Activated naive CD4-positive, alpha-beta T cell treated with anti-CD3 and anti-CD28 coated beads for 36 hours (primary cell): ENCODE measurements at regions of chr2 and their contacts with region 1.

Region 1: DNA sequence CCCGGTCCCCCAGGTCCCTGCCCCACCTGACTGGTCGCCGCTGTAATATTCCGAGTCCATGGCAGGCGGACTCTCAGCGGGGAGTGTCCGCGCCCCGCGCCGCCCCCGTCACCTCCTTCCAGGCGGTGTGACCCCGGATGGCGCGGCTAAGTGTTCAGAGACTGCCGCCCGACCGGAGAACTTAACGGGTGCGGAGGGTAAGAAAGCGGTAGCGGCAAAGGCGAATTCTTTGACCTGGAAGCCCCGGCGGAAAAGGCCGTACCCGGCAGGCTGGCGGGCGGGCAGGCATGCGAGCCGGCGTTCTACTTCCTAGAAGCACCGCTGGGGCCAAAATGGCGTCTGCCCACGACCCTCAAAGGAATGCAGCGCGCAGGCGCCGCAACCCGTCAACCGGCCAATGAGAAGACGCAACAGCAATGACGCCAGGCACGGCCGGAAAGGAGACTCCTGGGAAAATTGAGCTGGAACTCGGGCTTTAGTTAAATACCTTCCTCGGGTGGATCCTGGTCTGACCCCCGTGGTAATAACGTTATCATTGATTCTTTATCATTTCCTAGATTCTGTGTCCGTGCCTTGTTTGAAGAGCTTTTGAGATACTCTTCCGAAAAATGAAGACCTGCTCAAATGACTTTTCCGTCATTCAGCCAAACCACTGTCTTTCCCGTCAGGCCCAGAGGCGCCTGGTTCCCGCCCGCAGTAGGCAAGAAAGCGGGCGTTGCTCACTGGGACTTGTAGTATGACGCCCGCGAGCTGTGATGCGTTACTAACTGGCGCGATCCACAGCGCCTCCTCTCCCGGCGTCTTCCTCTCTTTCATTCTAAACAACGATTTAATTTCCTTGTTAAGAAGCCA is at the start of gene IWS1:
- DNase-seq: peak; percentile 96
- H3K4me3 Mint-ChIP-seq: peak within 1 kb of the TSS; percentile 86
- H3K27ac Mint-ChIP-seq: peak within 1 kb of the TSS; percentile 90
- H3K4me1 Mint-ChIP-seq: peaks cover 27% of the 10 kb centered on the region
- H3K27me3 Mint-ChIP-seq: no peaks in the 10 kb centered on the region
- total RNA-seq, gene IWS1: 52.1 to 52.5 TPM

Region 2: GRCh38 chr2:127081826-127082633 is 444.3 kb before region 1 on chr2:
- CTCF ChIA-PET with region 1: no interaction called
- intact Hi-C with region 1: loop called (anchors 1 kb)
- DNase-seq: peak; percentile 86
- H3K4me3 Mint-ChIP-seq: peak overlapping the region; percentile 82
- H3K27ac Mint-ChIP-seq: peak overlapping the region; percentile 91
- H3K4me1 Mint-ChIP-seq: peaks cover 74% of the 10 kb centered on the region
- H3K27me3 Mint-ChIP-seq: no peaks in the 10 kb centered on the region

Region 3: GRCh38 chr2:127293748-127294562 is 232.4 kb before region 1 on chr2 and contains the start of gene ERCC3:
- CTCF ChIA-PET with region 1: no interaction called
- intact Hi-C with region 1: loop called (anchors 1 kb)
- DNase-seq: peak; percentile 88
- H3K4me3 Mint-ChIP-seq: peak within 1 kb of the TSS; percentile 99
- H3K27ac Mint-ChIP-seq: peak within 1 kb of the TSS; percentile 95
- H3K4me1 Mint-ChIP-seq: peaks cover 25% of the 10 kb centered on the region
- H3K27me3 Mint-ChIP-seq: no peaks in the 10 kb centered on the region
- total RNA-seq, gene ERCC3: 37.0 to 41.1 TPM

Region 4: GRCh38 chr2:127418300-127419111 is 107.9 kb before region 1 on chr2 and contains the start of gene PROC:
- CTCF ChIA-PET with region 1: no interaction called
- intact Hi-C with region 1: no loop called
- DNase-seq: no peak
- H3K4me3 Mint-ChIP-seq: no peak within 1 kb of the TSS
- H3K27ac Mint-ChIP-seq: no peak within 1 kb of the TSS
- H3K4me1 Mint-ChIP-seq: peaks cover 25% of the 10 kb centered on the region
- H3K27me3 Mint-ChIP-seq: peaks cover 36% of the 10 kb centered on the region
- total RNA-seq, gene PROC: not detected

Region 5: GRCh38 chr2:127563458-127564428 is 37.4 kb after region 1 on chr2:
- CTCF ChIA-PET with region 1: no interaction called
- intact Hi-C with region 1: loop called (anchors 1 kb)
- DNase-seq: peak; percentile 35
- H3K4me3 Mint-ChIP-seq: no peak overlapping the region
- H3K27ac Mint-ChIP-seq: peak overlapping the region; percentile 29
- H3K4me1 Mint-ChIP-seq: peaks cover 10% of the 10 kb centered on the region
- H3K27me3 Mint-ChIP-seq: no peaks in the 10 kb centered on the region

Region 6: DNA sequence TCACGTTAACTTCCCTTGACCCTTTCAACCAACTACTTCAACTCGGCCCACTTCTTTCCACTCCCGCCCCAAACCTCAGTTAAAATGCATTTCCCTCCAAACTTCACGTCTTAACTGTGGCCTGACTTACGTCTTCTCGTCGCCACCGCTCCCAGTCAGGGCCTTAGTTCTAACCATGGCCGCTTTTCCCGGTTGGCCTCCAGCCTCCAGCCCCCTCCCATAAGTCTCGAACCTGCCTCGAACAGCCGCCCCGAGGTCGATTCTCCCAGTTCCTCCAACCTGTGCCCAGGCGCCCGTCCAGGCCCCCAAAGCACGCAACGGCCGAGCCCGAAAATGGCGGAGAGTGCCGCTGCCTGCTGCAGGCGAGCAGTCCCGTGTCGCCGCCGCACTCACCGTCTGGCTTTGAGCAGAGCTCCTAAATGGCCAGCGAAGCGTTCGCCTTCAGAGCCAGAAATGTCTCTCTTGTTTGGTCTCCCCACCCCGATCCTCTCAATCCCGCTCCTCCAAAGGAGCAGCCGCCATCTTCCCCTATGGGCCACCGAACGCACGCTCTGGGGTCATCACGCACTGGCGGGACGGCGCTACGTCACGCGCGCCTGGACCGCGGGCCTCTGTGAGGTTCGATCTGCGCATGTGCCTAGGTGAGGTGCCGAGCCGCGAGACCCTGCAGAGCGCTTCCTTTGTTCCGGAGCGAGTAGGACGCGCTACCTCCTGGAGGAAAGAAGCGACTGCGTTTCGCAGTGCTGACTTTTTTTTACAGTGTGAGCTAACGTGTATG is 284.4 kb after region 1 on chr2 and contains the start of gene WDR33:
- CTCF ChIA-PET with region 1: no interaction called
- intact Hi-C with region 1: loop called (anchors 1 kb)
- DNase-seq: peak; percentile 97
- H3K4me3 Mint-ChIP-seq: peak within 1 kb of the TSS; percentile 94
- H3K27ac Mint-ChIP-seq: peak within 1 kb of the TSS; percentile 97
- H3K4me1 Mint-ChIP-seq: peaks cover 41% of the 10 kb centered on the region
- H3K27me3 Mint-ChIP-seq: no peaks in the 10 kb centered on the region
- total RNA-seq, gene WDR33: 61.1 to 63.2 TPM

Region 7: GRCh38 chr2:128090945-128091725 is 564.8 kb after region 1 on chr2 and contains the start of gene UGGT1:
- CTCF ChIA-PET with region 1: no interaction called
- intact Hi-C with region 1: loop called (anchors 5 kb)
- DNase-seq: peak; percentile 96
- H3K4me3 Mint-ChIP-seq: peak within 1 kb of the TSS; percentile 90
- H3K27ac Mint-ChIP-seq: peak within 1 kb of the TSS; percentile 86
- H3K4me1 Mint-ChIP-seq: peaks cover 42% of the 10 kb centered on the region
- H3K27me3 Mint-ChIP-seq: no peaks in the 10 kb centered on the region
- total RNA-seq, gene UGGT1: 37.3 to 40.1 TPM

Region 8: DNA sequence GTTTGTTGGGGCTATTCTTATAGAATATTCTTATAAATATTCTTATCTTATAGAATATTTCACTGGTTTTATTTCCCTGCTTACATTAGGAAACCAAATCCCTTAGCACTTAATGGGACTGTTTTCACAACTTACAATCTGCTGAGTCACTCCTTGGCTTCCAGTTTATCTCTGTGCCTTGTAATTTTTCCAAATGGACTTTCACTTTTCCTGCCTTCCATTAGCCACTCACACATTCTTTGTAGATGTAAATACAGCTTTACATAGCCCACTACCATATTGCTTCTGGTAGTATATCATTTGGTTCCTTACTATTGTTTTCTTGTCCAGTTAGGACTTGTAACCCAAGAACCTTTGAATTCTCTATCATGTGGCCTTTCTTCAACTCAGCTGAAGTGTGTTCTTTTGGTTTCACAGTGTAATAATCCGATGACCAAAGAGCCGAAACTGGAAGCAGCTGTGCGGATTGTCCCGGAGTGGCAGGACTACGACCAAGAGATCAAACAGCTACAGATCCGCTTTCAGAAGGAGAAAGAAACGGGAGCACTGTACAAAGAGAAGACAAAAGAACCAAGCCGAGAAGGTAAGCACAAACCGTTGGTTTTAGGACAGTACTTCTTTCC is 660.8 kb after region 1 on chr2:
- CTCF ChIA-PET with region 1: no interaction called
- intact Hi-C with region 1: no loop called
- DNase-seq: no peak
- H3K4me3 Mint-ChIP-seq: no peak overlapping the region
- H3K27ac Mint-ChIP-seq: no peak overlapping the region
- H3K4me1 Mint-ChIP-seq: no peaks in the 10 kb centered on the region
- H3K27me3 Mint-ChIP-seq: no peaks in the 10 kb centered on the region